IMR-90 (cell line): ENCODE measurements at regions of chr2 and their contacts with region 1.

Region 1: DNA sequence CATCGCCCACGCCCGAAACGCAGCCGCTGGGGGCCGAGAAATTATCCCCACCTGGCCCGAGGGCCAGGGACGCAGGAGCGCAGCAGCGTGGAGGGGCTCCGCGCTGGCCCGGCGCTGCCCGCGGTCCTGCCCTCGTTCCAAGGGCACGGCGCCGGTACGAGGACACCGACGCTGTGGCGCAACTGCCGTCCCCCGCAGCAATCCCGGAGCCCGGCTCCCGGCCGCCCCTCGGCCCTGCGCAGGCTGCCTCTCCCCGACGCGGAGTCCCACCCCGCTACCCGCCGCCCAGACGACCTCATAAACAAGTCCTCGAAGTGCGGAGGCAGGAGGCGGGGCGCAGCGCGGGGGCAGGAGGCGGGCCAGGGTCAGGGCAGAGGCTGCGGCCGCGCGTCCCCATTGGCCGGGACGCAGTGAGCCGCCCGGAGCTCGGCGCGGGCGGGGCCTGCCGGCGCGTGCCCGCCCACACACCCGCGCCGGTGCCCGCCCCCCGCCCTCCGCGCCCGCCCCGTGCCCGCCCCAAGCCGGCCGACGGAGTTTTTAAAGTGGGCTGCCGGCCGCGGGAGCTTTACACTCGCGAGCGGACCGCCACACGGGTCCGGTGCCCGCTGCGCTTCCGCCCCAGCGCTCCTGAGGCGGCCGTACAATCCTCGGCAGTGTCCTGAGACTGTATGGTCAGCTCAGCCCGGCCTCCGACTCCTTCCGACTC is at the start of gene EPAS1:
- DNase-seq: peak; percentile 76
- ATAC-seq: peak; percentile 95
- H3K4me3 ChIP-seq: peak within 1 kb of the TSS; percentile 87
- H3K27ac ChIP-seq: peak within 1 kb of the TSS; percentile 82
- H3K4me1 ChIP-seq: peaks cover 7% of the 10 kb centered on the region; the same call in 1 of the 2 replicates
- H3K27me3 ChIP-seq: no peaks in the 10 kb centered on the region
- CTCF ChIP-seq: no peak
- POLR2A ChIP-seq: peak; percentile 97
- RAD21 ChIP-seq: 0 out of 2 replicates have a peak, but pooled peaks have one; percentile 26
- total RNA-seq, gene EPAS1: 21.9 and 40.7 TPM in 2 replicates

Region 2: GRCh38 chr2:45643543-45644542 is 653.1 kb before region 1 on chr2:
- CTCF ChIA-PET with region 1: no interaction called
- POLR2A ChIA-PET with region 1: no interaction called
- dilution Hi-C with region 1: no loop called
- in situ Hi-C with region 1: loop called (anchors 25 kb)
- intact Hi-C with region 1: no loop called
- DNase-seq: peak; percentile 31
- ATAC-seq: peak; percentile 99
- H3K4me3 ChIP-seq: peak overlapping the region; percentile 67
- H3K27ac ChIP-seq: peak overlapping the region; percentile 50; the same call in 1 of the 2 replicates
- H3K4me1 ChIP-seq: peaks cover 2% of the 10 kb centered on the region; the same call in 1 of the 2 replicates
- H3K27me3 ChIP-seq: peaks cover 34% of the 10 kb centered on the region
- CTCF ChIP-seq: peak; percentile 97
- POLR2A ChIP-seq: 0 out of 2 replicates have a peak, but pooled peaks have one; percentile 42
- RAD21 ChIP-seq: peak; percentile 99

Region 3: GRCh38 chr2:45960057-45960863 is 336.7 kb before region 1 on chr2:
- CTCF ChIA-PET with region 1: no interaction called
- POLR2A ChIA-PET with region 1: interaction called, 13 read pairs
- dilution Hi-C with region 1: no loop called
- in situ Hi-C with region 1: no loop called
- intact Hi-C with region 1: no loop called
- DNase-seq: no peak
- ATAC-seq: no peak
- H3K4me3 ChIP-seq: no peak overlapping the region
- H3K27ac ChIP-seq: no peak overlapping the region
- H3K4me1 ChIP-seq: peaks cover 18% of the 10 kb centered on the region
- H3K27me3 ChIP-seq: no peaks in the 10 kb centered on the region
- CTCF ChIP-seq: no peak
- POLR2A ChIP-seq: no peak
- RAD21 ChIP-seq: no peak

Region 4: GRCh38 chr2:46010925-46011490 is 286.0 kb before region 1 on chr2:
- CTCF ChIA-PET with region 1: interaction called, 4 read pairs
- POLR2A ChIA-PET with region 1: interaction called, 3 read pairs
- dilution Hi-C with region 1: no loop called
- in situ Hi-C with region 1: no loop called
- intact Hi-C with region 1: loop called (anchors 1 kb)
- DNase-seq: peak; percentile 74
- ATAC-seq: peak; percentile 59
- H3K4me3 ChIP-seq: no peak overlapping the region
- H3K27ac ChIP-seq: peak overlapping the region; percentile 48; the same call in 1 of the 2 replicates
- H3K4me1 ChIP-seq: peaks cover 38% of the 10 kb centered on the region
- H3K27me3 ChIP-seq: no peaks in the 10 kb centered on the region
- CTCF ChIP-seq: peak; percentile 76
- POLR2A ChIP-seq: no peak
- RAD21 ChIP-seq: peak; percentile 70

Region 5: DNA sequence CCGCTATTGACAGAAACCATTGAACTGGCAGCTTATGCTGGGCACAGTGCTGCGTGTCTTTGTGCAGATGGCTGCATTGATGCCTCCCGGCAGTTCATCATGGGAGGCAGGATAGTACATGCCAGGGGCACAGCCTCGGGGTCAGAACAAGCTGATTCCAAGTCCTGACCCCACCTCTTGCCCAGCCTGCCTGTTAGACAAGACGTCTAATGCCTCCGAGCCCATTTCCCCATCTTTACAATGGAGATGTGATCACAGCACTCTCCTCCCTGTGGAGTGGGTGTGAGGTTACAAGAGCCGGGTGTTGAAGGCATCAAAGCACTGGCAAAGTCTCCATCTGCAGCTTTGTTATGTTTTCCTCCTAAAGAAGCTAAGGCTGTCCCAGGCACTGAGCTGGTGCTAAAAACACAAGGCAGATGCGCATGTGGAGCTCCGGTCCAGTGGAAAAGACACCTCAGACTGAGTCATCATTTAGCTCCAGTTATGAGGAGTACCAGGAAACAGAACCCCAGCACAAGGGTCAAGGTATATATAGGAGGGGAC is 125.5 kb before region 1 on chr2:
- CTCF ChIA-PET with region 1: interaction called, 4 read pairs
- POLR2A ChIA-PET with region 1: no interaction called
- dilution Hi-C with region 1: no loop called
- in situ Hi-C with region 1: no loop called
- intact Hi-C with region 1: loop called (anchors 2 kb)
- DNase-seq: peak; percentile 95
- ATAC-seq: peak; percentile 91
- H3K4me3 ChIP-seq: no peak overlapping the region
- H3K27ac ChIP-seq: peak overlapping the region; percentile 66
- H3K4me1 ChIP-seq: peaks cover 18% of the 10 kb centered on the region
- H3K27me3 ChIP-seq: no peaks in the 10 kb centered on the region
- CTCF ChIP-seq: no peak
- POLR2A ChIP-seq: no peak
- RAD21 ChIP-seq: peak; percentile 24; the same call in 1 of the 2 replicates

Region 6: GRCh38 chr2:46364797-46365457 is 67.9 kb after region 1 on chr2:
- CTCF ChIA-PET with region 1: interaction called, 3 read pairs
- POLR2A ChIA-PET with region 1: interaction called, 7 read pairs
- dilution Hi-C with region 1: no loop called
- in situ Hi-C with region 1: no loop called
- intact Hi-C with region 1: loop called (anchors 1 kb)
- DNase-seq: peak; percentile 72
- ATAC-seq: peak; percentile 48
- H3K4me3 ChIP-seq: no peak overlapping the region
- H3K27ac ChIP-seq: no peak overlapping the region
- H3K4me1 ChIP-seq: peaks cover 19% of the 10 kb centered on the region
- H3K27me3 ChIP-seq: no peaks in the 10 kb centered on the region
- CTCF ChIP-seq: peak; percentile 79
- POLR2A ChIP-seq: no peak
- RAD21 ChIP-seq: peak; percentile 83